ENCODE measurements at regions of chr17 and their contacts with region 1.

Region 1: GRCh38 chr17:66915204-66916096 is 49.1 kb upstream of the CACNG4 start:
- DNase-seq: peak; percentile 58 to 70
- H3K4me3 ChIP-seq: no peak overlapping the region
- H3K27ac ChIP-seq: no peak overlapping the region
- H3K4me1 ChIP-seq: 0 out of 2 replicates have a peak, but pooled peaks cover 5% of the 10 kb centered on the region
- H3K27me3 ChIP-seq: no peaks in the 10 kb centered on the region
- CTCF ChIP-seq: peak; percentile 69

Region 2: DNA sequence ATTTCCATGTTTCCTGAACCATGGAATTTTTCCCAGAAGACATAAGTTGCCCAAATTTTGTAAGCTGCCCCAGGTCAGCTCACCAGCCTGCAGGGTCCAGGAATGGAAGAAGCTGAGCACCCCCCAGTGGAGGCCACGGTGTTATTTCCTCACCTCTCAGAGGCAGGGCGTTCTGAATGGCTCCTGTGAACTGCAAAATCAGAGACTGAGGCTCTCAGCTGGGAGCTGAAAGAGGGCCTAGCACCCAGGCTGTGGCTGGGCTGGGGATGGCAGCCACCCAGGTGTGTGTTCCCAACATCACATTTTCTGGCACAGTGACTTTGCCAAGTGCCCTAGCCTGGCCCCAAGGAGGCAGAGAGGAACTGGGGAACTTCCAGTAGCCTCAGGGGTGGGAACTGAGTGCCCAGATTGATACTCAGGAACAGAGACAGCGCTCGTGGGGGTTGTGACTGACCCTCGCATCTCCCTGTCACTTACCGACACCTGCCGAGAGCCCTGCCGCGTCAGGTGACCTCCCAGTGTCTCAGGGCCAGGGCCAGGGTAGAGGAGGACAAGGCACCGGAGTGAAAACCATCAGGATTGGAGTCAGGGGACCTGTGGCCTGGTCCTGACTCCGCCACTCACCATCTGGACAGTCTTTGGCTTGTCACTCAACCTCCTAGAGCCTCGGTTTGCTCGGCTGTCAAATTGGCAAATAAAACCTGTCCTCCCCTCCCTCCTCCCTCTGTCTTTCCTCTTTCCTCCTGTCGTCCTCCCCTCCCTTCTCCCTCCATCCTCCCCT is 60.3 kb after region 1 on chr17:
- CTCF ChIA-PET with region 1: interaction called, 6 read pairs
- POLR2A ChIA-PET with region 1: no interaction called
- intact Hi-C with region 1: loop called (anchors 1 kb)
- DNase-seq: peak in 1 of 2 experiments; percentile 37
- H3K4me3 ChIP-seq: no peak overlapping the region
- H3K27ac ChIP-seq: no peak overlapping the region
- H3K4me1 ChIP-seq: no peaks in the 10 kb centered on the region
- H3K27me3 ChIP-seq: no peaks in the 10 kb centered on the region
- CTCF ChIP-seq: peak; percentile 63

Region 3: DNA sequence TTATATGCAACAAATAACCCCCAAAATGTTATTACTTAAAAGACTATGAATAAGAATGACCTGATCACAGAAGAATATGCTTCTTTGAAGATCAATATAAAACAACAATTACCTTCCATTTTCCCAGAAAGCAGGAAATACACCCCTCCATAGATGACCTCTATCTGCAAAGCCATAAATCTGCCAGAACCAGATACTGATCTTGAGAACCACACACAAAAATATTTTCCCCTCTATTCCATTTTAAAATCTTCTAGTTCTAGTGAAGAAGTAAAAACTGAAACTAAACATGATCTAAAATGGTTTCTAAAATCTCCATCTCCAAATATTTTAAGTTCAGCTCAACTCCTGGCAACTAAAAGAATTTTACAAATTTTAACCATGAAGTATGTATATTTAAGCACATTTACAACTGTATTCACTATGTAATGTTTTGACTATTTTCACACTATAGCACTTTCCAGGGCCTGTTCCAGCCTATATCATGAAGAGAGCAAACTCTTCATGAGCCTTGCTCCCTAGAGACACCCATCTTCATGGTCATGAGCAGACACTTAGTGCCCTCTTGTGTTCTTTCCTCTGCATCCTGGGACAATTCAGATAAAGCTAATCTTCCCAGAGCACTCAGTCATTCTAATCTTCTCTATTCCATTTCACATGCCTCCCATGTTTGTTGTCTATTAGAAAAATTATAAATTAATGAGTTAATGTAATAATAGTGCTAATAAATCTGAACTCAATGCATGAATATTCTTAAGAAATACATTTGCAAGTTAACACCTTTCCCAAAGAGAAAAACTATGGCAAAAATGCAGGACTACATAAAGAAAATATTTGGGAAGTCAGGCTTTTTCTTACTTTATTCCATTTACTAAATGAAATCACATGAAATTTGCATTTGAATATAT is 242.5 kb after region 1 on chr17:
- CTCF ChIA-PET with region 1: no interaction called
- POLR2A ChIA-PET with region 1: no interaction called
- intact Hi-C with region 1: loop called (anchors 1 kb)
- DNase-seq: no peak
- H3K4me3 ChIP-seq: no peak overlapping the region
- H3K27ac ChIP-seq: no peak overlapping the region
- H3K4me1 ChIP-seq: no peaks in the 10 kb centered on the region
- H3K27me3 ChIP-seq: no peaks in the 10 kb centered on the region
- CTCF ChIP-seq: peak; percentile 46; the same call in 1 of the 2 replicates

Measured in PC-9 (cell line).